Dendritic cell treated with granulocyte-macrophage colony-stimulating factor and Interleukin-4, amounts not matched to agents 40 ng/mL and 50 ng/mL, for 4 days (primary cell): ENCODE measurements at regions of chr16 and their contacts with region 1.

Region 1: GRCh38 chr16:30445408-30446202 is at the start of gene SEPHS2:
- H3K4me3 Mint-ChIP-seq: peak within 1 kb of the TSS; percentile 80
- H3K27ac Mint-ChIP-seq: peak within 1 kb of the TSS; percentile 89
- H3K4me1 Mint-ChIP-seq: peaks cover 44% of the 10 kb centered on the region
- H3K27me3 Mint-ChIP-seq: no peaks in the 10 kb centered on the region

Region 2: DNA sequence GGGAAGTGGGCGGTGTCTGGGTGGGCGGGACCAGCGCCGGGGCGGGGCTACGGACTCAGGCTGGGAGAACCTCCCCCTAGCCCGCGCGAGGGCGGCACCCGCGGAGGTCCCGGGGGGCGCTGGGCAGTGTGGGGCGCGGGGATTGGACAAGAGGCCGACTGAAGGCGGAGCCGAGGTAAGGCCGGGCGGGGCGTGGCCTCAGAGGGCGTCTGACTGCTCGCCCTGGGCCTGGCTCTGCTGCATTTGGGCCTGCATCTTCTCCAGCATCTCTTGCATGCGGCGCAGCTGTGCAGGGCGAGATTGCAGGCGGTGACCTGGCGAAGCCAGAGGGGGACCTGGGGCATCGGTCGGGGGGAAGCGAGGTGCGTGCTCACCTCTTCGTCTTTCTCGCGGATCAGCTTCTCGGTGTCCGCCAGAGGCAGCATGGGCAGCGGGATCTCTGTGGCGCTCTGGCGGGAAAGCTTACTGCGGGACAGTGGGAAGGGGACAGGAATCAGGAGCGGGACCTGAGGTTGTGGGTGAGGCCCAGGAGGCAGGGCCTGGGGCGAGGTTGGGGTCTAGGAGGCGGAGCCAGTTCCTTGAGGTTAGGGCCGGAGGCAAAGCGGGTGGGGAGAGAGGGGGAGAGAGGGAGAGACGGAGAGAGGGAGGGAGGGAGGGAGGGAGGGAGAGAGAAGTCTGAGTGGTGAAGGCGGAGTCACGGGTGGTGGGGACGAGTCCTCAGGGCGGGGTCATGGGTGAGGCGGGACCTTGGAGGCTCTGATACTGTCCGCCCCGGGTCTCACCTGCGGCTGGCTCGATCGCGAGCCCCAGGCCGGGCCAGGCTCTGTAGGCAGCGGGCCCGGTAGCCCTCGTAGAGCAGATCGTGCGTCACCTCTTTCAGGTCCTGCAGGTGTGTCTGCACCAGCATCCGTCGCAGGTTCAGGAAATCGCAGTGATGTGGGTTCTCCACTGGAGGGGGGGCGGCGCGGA is 67.1 kb before region 1 on chr16:
- intact Hi-C with region 1: no loop called
- H3K4me3 Mint-ChIP-seq: peak overlapping the region; percentile 88
- H3K27ac Mint-ChIP-seq: peak overlapping the region; percentile 100
- H3K4me1 Mint-ChIP-seq: peaks cover 48% of the 10 kb centered on the region
- H3K27me3 Mint-ChIP-seq: peaks cover 13% of the 10 kb centered on the region

Region 3: GRCh38 chr16:30482366-30482765 is 36.8 kb after region 1 on chr16:
- intact Hi-C with region 1: loop called (anchors 5 kb)
- H3K4me3 Mint-ChIP-seq: no peak overlapping the region
- H3K27ac Mint-ChIP-seq: peak overlapping the region; percentile 26
- H3K4me1 Mint-ChIP-seq: peaks cover 54% of the 10 kb centered on the region
- H3K27me3 Mint-ChIP-seq: no peaks in the 10 kb centered on the region

Region 4: DNA sequence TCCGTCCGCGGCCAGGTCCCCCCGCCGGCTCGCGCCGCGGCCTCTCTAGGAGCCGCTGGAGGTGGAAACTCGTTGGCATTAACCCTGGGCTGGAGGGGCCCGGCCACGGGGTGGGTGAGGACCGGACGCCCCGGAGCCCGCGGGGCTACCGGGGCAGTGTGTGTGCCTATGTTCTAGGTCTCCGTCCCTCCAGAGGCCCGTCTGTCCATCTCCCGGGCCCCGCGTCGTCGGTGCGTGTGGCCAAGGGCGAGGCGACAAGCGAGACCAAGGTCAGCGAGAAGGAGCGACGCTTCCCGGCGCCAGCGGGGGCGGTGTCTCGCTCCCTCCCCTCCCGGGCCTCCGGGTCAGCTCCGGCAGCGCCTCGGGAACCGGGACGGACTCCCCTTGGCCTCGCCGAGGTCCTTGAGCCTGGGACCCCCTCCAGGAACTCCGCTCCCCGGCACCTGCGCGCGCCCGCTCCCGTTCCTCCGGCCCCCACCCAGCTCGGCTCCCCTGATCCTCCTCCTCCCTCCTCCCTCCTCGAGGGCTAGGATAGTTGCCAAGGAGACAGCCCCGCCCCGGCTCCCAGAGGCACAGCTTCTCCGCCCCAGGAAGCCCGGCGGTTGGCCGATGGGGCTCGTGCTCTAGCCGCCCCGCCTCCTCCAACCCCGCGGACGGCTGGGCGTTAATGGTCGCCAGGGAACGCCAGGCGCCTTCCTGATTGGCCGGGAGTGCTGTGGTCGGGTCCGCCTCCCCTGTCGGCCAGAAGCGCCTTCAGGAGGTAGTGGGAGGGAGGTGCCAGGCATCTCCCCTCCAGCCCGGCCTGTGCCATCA is 81.4 kb after region 1 on chr16:
- intact Hi-C with region 1: loop called (anchors 2 kb)
- H3K4me3 Mint-ChIP-seq: peak overlapping the region; percentile 76
- H3K27ac Mint-ChIP-seq: peak overlapping the region; percentile 99
- H3K4me1 Mint-ChIP-seq: peaks cover 67% of the 10 kb centered on the region
- H3K27me3 Mint-ChIP-seq: no peaks in the 10 kb centered on the region

Region 5: GRCh38 chr16:30567991-30568638 is 122.5 kb after region 1 on chr16:
- intact Hi-C with region 1: no loop called
- H3K4me3 Mint-ChIP-seq: no peak overlapping the region
- H3K27ac Mint-ChIP-seq: peak overlapping the region; percentile 43
- H3K4me1 Mint-ChIP-seq: peaks cover 52% of the 10 kb centered on the region
- H3K27me3 Mint-ChIP-seq: peaks cover 8% of the 10 kb centered on the region

Region 6: GRCh38 chr16:30609926-30610839 is 164.6 kb after region 1 on chr16 and contains the start of gene ZNF689:
- intact Hi-C with region 1: loop called (anchors 10 kb)
- H3K4me3 Mint-ChIP-seq: peak within 1 kb of the TSS; percentile 89
- H3K27ac Mint-ChIP-seq: peak within 1 kb of the TSS; percentile 92
- H3K4me1 Mint-ChIP-seq: peaks cover 61% of the 10 kb centered on the region
- H3K27me3 Mint-ChIP-seq: no peaks in the 10 kb centered on the region